ENCODE measurements at regions of chr17 and their contacts with region 1.

Region 1: DNA sequence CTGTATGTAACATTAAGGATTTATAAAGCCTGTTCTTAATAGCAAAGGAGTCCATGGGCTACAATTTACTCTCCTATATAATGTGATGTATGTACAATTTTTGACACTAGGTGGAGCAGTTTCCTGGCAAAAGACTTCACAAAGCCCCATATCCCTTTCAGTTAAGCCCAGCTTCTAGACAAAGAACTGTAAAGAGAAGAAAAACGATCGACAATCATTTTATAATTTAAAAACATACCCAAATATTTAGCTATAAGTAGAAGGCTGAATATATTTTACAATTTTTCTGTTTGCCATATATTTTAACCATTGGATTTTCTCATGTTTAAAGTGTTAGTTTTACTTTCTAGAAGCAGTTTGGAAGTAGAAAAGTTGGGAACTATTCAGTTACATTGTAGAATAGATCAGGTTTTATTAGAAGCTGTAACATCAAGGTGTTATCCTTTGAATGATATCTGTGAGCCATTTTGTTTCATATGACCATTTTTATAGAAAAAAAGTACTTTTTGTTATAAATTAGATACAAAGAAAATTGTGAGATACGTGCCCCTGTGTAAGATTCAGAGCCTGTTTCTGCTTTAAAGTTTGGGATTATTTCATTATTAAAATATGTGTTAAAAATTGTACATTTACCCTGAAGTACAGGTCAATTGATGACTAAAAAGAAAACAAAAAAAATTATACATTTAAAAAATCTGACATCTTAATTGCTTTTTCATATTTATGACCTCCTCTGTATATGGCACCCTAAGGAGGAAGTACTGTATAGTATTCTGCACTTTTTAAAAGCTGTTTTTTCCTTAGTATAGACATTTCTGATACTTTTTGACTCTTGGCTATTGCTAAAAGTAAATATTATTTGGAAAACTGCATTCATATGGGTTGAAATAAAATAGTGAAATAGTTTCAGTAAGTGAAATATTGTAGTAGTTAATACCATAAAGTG is 46.3 kb downstream of the VMP1 start:
- DNase-seq: peak; percentile 35
- ATAC-seq: peak; percentile 76
- H3K4me3 Mint-ChIP-seq: peak overlapping the region; percentile 50
- H3K27ac Mint-ChIP-seq: peak overlapping the region; percentile 84
- H3K4me1 Mint-ChIP-seq: peaks cover 61% of the 10 kb centered on the region
- H3K27me3 Mint-ChIP-seq: no peaks in the 10 kb centered on the region
- CTCF ChIP-seq: peak; percentile 77

Region 2: DNA sequence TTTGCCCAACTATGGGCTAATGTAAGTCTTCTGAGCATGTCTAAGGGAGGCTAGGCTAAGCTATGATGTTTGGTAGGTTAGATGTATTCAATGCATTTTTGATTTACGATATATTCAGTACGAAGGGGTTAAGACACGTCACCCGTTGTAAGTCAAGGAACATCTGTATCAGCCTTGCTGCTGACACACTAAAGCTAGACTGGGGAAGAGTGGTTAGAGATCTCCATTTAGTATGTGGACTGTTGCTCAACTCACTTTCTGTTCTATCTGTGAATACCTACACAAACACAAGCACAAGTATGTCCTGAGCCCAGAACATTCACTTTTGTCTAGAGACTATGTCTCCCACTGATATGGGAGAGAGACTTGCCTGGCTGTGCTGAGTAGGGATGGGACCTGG is 25.2 kb after region 1 on chr17:
- CTCF ChIA-PET with region 1: interaction called, 108 read pairs
- POLR2A ChIA-PET with region 1: interaction called, 115 read pairs
- intact Hi-C with region 1: no loop called
- DNase-seq: no peak
- ATAC-seq: no peak
- H3K4me3 Mint-ChIP-seq: no peak overlapping the region
- H3K27ac Mint-ChIP-seq: peak overlapping the region; percentile 85
- H3K4me1 Mint-ChIP-seq: peaks cover 54% of the 10 kb centered on the region
- H3K27me3 Mint-ChIP-seq: no peaks in the 10 kb centered on the region
- CTCF ChIP-seq: no peak

Region 3: DNA sequence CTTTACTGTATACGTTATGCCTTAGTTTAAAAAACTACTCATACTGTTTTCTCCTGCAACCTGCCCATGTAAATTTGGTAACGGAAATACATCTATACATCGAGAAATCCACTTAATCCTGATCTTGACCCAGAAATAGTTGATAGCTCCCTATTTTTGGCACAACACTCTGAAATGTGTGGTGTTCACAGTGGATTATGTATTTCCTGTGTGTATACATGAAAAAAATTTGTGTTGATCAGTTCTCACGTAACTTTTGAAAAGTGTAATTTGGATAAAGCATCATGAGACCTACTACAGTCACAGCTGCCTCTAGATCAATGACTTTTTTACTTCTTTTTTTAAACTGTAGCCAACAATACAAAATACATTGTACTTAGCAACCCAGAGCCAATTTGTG is 44.3 kb after region 1 on chr17:
- CTCF ChIA-PET with region 1: interaction called, 10 read pairs
- POLR2A ChIA-PET with region 1: interaction called, 3 read pairs
- intact Hi-C with region 1: no loop called
- DNase-seq: no peak
- ATAC-seq: no peak
- H3K4me3 Mint-ChIP-seq: no peak overlapping the region
- H3K27ac Mint-ChIP-seq: peak overlapping the region; percentile 11
- H3K4me1 Mint-ChIP-seq: peaks cover 24% of the 10 kb centered on the region
- H3K27me3 Mint-ChIP-seq: no peaks in the 10 kb centered on the region
- CTCF ChIP-seq: no peak

Region 4: DNA sequence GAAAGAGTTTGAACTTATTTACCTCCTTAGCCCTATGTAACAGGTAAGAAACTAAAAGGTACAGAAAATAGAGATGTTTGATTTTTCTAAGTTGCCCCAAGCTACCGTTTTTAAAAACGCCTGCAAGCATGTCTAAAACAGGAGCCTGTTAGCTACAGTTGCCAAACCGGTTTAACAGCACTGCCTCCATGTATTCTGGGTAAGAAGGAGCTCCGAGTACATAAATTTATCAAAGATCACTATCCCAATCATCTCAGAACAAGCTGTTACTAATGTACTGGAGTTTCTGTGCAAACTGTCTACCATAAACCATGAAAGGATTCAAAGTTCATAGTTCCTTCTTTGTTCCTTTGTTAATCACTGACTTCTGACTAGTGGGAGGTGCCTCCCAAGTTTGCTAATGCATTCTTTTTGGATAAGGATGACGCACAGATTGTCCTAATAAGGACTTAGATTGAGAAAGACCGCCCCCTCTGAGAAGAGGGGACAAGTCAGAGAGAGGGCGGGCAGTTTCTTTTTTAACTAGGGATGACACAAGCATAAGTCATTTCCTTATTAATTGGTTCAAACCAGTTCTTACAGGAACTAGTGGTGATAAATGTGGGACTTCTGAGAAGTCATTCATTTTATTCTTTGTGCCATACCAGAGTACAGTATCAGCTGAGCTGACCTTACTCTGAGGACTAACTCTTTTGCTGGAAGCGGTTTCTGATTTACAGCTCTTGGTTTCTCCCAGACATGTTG is 83.7 kb after region 1 on chr17:
- CTCF ChIA-PET with region 1: interaction called, 16 read pairs
- POLR2A ChIA-PET with region 1: interaction called, 443 read pairs
- intact Hi-C with region 1: no loop called
- DNase-seq: peak; percentile 82
- ATAC-seq: peak; percentile 86
- H3K4me3 Mint-ChIP-seq: peak overlapping the region; percentile 83
- H3K27ac Mint-ChIP-seq: peak overlapping the region; percentile 99
- H3K4me1 Mint-ChIP-seq: peaks cover 28% of the 10 kb centered on the region
- H3K27me3 Mint-ChIP-seq: peaks cover 2% of the 10 kb centered on the region
- CTCF ChIP-seq: no peak

Region 5: GRCh38 chr17:59892924-59893676 is 139.3 kb after region 1 on chr17 and contains the starts of genes RPS6KB1 and TUBD1:
- CTCF ChIA-PET with region 1: interaction called, 11 read pairs
- POLR2A ChIA-PET with region 1: interaction called, 7 read pairs
- intact Hi-C with region 1: no loop called
- DNase-seq: peak; percentile 98
- ATAC-seq: peak; percentile 98
- H3K4me3 Mint-ChIP-seq: peak within 1 kb of the TSS; percentile 93
- H3K27ac Mint-ChIP-seq: peak within 1 kb of the TSS; percentile 98
- H3K4me1 Mint-ChIP-seq: peaks cover 42% of the 10 kb centered on the region
- H3K27me3 Mint-ChIP-seq: no peaks in the 10 kb centered on the region
- CTCF ChIP-seq: no peak
- total RNA-seq, gene RPS6KB1: 39.9 to 44.2 TPM
- total RNA-seq, gene TUBD1: 7.9 to 11.1 TPM

Region 6: DNA sequence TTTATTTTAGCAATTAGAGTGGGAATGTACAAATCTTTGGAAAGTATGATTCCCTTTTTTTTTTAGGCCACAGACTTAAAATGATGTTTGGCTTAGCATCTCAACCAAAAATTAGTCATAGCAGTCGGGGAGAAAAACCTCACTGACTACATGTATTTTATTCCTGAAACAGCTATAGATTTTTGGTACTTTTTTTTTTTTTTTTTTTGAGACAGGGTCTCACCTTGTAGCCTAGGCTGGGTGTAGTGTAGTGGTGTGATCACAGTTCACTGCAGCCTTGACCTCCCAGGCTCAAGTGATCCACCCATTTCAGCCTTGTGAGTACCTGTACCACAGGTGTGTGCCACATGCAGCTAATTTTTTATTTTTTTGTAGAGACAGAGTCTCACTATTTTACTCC is 187.3 kb after region 1 on chr17:
- CTCF ChIA-PET with region 1: no interaction called
- POLR2A ChIA-PET with region 1: no interaction called
- intact Hi-C with region 1: no loop called
- DNase-seq: no peak
- ATAC-seq: peak; percentile 56
- H3K4me3 Mint-ChIP-seq: no peak overlapping the region
- H3K27ac Mint-ChIP-seq: peak overlapping the region; percentile 91
- H3K4me1 Mint-ChIP-seq: peaks cover 37% of the 10 kb centered on the region
- H3K27me3 Mint-ChIP-seq: no peaks in the 10 kb centered on the region
- CTCF ChIP-seq: no peak

Measured in activated CD8-positive, alpha-beta T cell treated with anti-CD3 and anti-CD28 coated beads for 36 hours (primary cell).